ENCODE measurements at regions of chr5 and their contacts with region 1.

Region 1: DNA sequence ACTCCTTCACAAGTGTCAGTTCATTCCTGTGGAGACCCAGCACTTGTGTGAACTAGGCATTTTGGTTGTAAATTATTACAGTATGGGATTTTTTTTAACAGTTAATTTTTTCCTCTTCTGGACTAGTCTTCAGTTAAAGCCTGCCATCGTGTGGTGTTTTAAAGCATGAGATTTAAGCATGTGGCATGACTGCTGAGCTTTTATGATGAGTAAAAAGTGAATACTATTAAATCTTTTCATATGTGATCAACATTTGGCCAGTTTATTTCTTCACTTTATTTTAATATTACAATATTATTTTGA is 25.0 kb downstream of the LMNB1 start:
- DNase-seq: peak; percentile 67
- H3K4me3 Mint-ChIP-seq: peak overlapping the region; percentile 15
- H3K27ac Mint-ChIP-seq: peak overlapping the region; percentile 37
- H3K4me1 Mint-ChIP-seq: peaks cover 35% of the 10 kb centered on the region
- H3K27me3 Mint-ChIP-seq: no peaks in the 10 kb centered on the region
- CTCF ChIP-seq: peak; percentile 70

Region 2: GRCh38 chr5:126339215-126339805 is 462.6 kb before region 1 on chr5:
- CTCF ChIA-PET with region 1: interaction called, 3 read pairs
- POLR2A ChIA-PET with region 1: interaction called, 4 read pairs
- intact Hi-C with region 1: loop called (anchors 1 kb)
- DNase-seq: peak; percentile 86
- H3K4me3 Mint-ChIP-seq: no peak overlapping the region
- H3K27ac Mint-ChIP-seq: no peak overlapping the region
- H3K4me1 Mint-ChIP-seq: peaks cover 5% of the 10 kb centered on the region
- H3K27me3 Mint-ChIP-seq: no peaks in the 10 kb centered on the region
- CTCF ChIP-seq: peak; percentile 85

Region 3: DNA sequence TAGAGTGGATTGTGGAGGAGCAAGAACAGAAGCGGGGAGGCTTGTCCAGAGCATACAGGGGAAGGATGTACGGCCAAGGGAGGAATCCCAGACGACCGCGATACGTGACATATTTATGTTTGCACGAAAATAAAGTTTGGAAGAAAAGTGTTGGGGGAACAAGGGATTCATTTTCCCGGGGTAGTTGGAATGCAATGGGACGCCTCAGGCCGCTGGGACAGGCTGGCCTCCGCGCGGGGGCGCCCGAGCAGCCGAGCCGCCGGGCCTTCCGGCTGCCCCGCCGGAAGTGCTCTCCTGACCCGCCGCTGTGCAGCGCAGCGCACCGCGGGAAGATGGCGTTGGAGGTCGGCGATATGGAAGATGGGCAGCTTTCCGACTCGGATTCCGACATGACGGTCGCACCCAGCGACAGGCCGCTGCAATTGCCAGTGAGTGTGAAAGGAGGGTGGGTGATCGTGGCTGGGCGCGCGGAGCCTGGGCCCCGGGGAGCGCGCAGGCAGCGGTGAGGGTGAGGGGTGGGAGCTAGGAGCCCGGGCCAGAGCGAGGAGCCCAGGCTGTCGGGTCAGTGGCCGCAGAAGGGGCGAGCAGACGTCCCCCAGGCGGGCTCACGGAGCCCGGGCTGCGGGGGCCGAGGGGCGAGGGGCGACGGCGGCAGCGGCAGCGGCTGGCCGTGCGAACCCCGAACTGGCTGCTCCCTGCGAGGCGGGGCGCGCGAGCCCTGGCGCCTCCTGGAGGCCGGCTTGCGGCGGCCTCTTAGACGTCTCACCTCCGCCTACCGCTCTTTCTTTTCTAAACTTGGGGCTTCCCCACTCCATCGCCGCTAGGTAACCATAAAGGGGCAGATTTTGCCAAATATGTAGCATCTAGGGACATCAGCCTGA is 201.1 kb before region 1 on chr5 and contains the start of gene PHAX:
- CTCF ChIA-PET with region 1: interaction called, 7 read pairs
- POLR2A ChIA-PET with region 1: no interaction called
- intact Hi-C with region 1: loop called (anchors 1 kb)
- DNase-seq: peak; percentile 86
- H3K4me3 Mint-ChIP-seq: peak within 1 kb of the TSS; percentile 86
- H3K27ac Mint-ChIP-seq: peak within 1 kb of the TSS; percentile 83
- H3K4me1 Mint-ChIP-seq: peaks cover 31% of the 10 kb centered on the region
- H3K27me3 Mint-ChIP-seq: no peaks in the 10 kb centered on the region
- CTCF ChIP-seq: peak; percentile 71
- total RNA-seq, gene PHAX: 57.4 and 73.2 TPM in 2 replicates

Region 4: DNA sequence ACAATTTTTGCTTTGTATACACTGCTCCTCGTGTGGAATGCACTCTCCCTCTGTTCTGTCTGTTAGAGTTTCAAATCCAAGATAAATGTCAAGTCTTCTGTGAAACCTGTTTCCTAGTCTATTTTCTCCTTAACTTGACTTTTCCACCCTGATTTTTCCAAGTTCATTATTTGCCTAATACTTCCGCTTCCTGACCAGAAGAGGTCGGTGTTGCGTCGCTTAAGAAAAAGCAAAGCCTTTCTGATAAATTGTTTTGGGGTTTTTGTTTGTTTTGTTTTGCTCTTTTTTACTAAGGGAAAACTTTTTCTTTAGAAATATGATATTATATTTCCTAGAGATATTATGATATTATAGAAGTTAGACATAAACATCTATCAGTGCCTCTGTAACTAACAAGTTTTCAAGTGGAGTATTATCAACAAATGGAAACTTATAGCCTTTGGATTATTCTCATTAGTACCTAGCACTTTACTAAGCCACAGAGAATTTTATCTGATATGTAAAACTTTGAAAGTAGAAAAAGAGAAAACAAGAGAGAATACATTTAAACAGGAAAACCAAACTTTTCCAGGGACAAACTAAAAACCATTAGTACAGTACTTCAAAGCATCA is 145.4 kb before region 1 on chr5:
- CTCF ChIA-PET with region 1: interaction called, 54 read pairs
- POLR2A ChIA-PET with region 1: interaction called, 12 read pairs
- intact Hi-C with region 1: loop called (anchors 1 kb)
- DNase-seq: peak; percentile 67
- H3K4me3 Mint-ChIP-seq: no peak overlapping the region
- H3K27ac Mint-ChIP-seq: no peak overlapping the region
- H3K4me1 Mint-ChIP-seq: no peaks in the 10 kb centered on the region
- H3K27me3 Mint-ChIP-seq: no peaks in the 10 kb centered on the region
- CTCF ChIP-seq: peak; percentile 98

Region 5: DNA sequence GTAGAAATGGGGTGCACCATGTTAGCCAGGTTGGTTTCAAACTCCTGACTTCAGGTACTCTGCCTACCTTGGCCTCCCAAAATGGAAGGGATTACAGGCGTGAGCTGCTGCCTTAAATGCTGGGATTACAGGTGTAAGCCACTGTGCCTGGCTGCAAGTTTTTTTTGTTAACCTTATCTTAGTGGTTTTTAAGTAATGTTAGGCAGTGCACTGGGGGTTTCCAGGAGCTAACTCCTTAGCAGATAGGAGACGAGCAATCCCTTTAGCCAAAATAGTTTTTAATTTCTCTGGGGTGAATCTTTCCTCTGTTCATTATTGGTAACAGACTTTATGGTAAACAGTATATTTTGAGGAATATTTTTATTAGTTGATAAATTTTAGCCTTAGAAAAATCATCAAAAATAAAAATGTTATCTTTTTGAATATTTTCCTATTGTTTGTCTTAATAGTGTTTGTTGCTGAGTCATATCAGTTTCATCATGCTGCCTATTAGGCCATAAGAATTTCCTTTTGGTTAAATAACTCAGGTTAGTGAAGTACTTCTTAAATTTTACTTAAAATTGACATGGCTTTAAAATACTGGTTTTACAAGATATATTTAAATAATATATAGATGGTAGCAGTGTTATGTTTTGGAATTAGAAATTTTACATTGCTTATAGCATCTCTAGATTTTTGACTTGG is 12.9 kb after region 1 on chr5:
- CTCF ChIA-PET with region 1: interaction called, 13 read pairs
- POLR2A ChIA-PET with region 1: no interaction called
- intact Hi-C with region 1: no loop called
- DNase-seq: peak; percentile 46
- H3K4me3 Mint-ChIP-seq: no peak overlapping the region
- H3K27ac Mint-ChIP-seq: peak overlapping the region; percentile 61
- H3K4me1 Mint-ChIP-seq: peaks cover 5% of the 10 kb centered on the region
- H3K27me3 Mint-ChIP-seq: no peaks in the 10 kb centered on the region
- CTCF ChIP-seq: no peak